RWPE1 (cell line): ENCODE measurements at regions of chr12 and their contacts with region 1.

Region 1: DNA sequence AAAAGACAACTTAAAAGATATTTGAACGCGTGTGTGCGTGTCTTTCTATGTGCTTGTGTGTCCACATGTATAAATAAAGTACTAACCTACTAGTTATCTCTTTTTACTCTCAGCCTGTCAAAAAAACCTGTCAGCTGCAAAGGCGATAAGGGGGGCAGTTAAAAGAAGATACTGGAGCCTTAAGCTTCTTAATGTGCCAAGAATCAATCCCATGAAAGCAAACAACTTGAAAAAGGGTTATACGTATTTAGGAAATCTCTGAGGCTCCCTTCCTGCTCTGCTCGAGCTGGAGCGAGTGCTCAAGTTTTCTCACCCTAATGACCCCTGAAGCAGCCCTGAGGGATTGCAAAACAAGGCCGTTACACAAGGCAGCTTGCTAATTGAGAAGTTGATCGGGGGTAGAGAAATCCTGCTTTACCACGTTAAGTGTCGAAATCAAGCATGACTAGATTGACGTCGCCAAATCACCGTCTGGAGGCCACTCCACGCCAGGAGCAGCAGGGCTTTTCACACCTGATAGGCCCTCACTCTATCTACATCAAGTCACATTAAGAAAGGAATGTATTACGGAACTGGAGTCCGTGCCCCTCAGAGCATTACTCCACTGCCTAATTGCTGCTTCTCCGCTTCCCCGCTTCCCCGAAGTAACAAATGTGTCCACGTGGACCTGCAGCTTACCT is 32.4 kb downstream of the LMO3 start:
- DNase-seq: peak; percentile 6
- H3K27ac ChIP-seq: no peak overlapping the region
- CTCF ChIP-seq: no peak

Region 2: DNA sequence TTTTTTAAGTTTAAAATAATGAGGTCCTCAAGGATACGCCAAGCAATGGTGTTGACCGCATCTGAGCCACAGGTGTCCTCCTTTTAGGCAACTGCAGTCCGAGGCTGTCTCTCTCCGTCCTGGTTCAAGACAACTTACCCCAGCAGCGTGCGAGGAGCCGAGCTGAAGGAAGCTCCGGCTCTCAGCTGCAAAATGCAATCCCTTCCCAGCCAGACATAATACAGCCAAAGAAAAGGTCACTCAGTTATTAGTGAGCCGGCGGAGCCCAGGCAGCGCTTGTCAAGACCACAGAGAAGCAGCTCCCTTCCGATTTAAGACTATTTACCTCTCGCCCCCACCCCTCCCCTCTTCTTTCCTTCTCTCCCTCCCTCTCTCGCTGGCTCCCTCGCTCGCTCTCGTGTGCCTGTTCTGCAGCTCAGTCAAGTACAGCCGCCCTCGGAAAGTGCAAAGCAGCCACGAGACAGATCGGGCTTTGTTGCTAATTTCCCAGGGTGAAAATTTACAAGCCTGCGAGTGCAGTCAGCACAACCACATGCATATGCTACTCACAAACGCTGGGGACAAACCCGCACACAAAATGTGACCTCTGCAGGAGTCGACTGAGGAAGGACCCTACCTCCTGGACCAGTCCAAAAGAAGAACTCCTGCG is 32.8 kb after region 1 on chr12:
- CTCF ChIA-PET with region 1: no interaction called
- POLR2A ChIA-PET with region 1: interaction called, 12 read pairs
- DNase-seq: no peak
- H3K27ac ChIP-seq: no peak overlapping the region
- CTCF ChIP-seq: no peak